ENCODE measurements at regions of chr15 and their contacts with region 1.

Region 1: DNA sequence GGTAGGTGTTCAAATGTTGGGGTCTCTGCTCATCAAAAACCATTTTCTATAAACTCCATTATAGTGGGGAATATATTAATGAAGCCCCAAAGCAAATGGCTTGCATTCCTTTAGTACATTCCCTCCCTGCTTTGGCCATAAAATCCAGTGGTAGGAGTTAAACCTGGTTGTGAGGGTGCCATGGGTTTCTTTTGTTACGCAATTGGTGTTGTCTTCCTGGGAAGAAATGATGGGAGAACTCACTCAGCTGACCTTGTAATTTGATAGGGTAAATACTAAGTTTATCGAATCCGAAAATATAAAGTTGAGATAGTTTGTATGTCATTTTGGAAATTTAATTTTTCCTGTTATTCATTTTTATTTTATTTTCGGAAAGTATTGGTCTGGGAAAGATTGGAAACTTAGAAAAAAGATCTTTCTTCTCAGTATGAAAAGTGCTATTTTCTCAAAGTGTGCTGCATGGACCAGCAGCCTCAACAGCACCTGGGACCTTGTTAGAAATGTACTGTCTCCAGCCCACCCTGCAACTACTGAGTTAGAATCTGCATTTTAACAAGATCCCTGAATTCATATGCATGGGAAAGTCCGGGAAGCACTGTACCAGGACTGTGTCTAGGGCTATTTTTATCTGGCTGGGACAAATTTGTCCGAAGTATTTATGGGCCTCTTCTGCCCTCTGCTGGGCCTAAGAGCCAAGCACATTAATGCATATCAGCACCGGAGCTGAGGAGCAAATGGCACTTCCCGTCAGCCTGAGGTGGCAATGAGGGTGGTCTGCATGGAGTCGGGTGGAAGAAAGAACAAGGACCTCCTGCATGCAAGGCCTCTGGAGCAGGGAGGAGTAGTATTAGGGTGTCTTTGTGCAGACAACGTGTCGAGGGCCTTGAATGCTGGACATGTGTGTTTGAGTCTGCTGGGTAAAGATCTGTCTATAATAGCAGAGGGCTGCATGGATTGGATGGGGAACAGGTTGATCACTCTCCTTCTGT is 54.7 kb downstream of the FAM81A start:
- DNase-seq: peak; percentile 61 to 81
- ATAC-seq: peak; percentile 95 to 98
- H3K4me3 ChIP-seq: no peak overlapping the region
- H3K27ac ChIP-seq: peak overlapping the region; percentile 55 to 71
- H3K4me1 ChIP-seq: peaks cover 9% of the 10 kb centered on the region
- CTCF ChIP-seq: peak; percentile 98
- EP300 ChIP-seq: no peak
- POLR2A ChIP-seq: no peak
- RAD21 ChIP-seq: peak; percentile 100

Region 2: GRCh38 chr15:58980351-58980939 is 512.2 kb before region 1 on chr15:
- CTCF ChIA-PET with region 1: interaction called, 47 read pairs
- POLR2A ChIA-PET with region 1: no interaction called
- DNase-seq: peak; percentile 43 to 50
- ATAC-seq: peak in 1 of 2 experiments; percentile 55; a peak in 1 of 6 replicates
- H3K4me3 ChIP-seq: no peak overlapping the region
- H3K27ac ChIP-seq: no peak overlapping the region
- H3K4me1 ChIP-seq: no peaks in the 10 kb centered on the region
- CTCF ChIP-seq: peak; percentile 87
- EP300 ChIP-seq: no peak
- POLR2A ChIP-seq: no peak
- RAD21 ChIP-seq: peak; percentile 83 to 91

Region 3: GRCh38 chr15:59131969-59132562 is 360.6 kb before region 1 on chr15:
- CTCF ChIA-PET with region 1: interaction called, 12 read pairs
- POLR2A ChIA-PET with region 1: no interaction called
- DNase-seq: no peak
- ATAC-seq: no peak
- H3K4me3 ChIP-seq: no peak overlapping the region
- H3K27ac ChIP-seq: no peak overlapping the region
- H3K4me1 ChIP-seq: no peaks in the 10 kb centered on the region
- CTCF ChIP-seq: no peak
- EP300 ChIP-seq: no peak
- POLR2A ChIP-seq: no peak
- RAD21 ChIP-seq: no peak

Region 4: DNA sequence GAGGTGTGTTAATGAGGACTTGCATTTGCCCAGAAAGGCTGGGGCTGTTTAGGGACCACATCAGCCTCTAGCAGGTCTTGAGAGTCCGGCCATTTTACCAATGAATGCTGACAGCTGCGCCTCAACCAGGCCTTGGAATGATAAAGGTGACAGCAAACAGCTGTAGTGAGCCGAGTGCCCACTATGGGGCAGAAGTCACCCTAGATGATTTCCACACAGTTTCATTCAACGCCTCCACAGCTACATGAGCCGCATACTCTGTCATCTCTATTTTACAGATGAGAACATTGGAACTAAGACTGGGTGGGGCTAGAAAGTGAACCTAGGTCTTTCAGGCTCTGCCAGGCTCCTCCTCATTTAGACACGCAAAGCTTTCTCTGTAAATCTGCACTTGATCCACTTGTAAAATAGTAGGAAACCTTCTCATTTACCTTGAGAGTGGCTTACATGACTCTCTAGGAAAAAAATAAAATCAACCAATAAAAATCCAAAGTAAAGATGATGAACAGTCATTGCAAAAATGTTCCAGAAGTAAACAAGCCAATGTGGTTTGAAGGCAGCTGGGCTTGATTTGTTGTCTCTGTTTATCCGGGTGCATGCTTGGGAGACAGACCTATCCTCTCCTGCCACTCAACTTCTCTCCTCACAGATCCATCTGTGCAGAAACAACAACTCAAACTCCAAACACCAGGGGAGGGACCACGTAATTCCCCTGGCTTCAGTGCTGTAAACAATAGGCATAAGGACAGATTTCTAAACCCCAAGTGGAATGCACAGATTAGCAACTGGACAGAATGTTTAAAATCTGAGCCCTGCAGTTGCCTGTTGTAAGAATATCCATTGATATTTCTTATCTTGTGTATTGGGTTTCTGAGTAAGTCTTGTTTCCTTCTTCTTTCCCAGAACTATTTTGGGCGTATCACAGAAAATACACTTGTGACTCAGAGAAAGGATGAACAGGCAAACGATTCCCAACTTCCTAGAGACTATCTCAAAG is 317.6 kb before region 1 on chr15:
- CTCF ChIA-PET with region 1: interaction called, 31 read pairs
- POLR2A ChIA-PET with region 1: no interaction called
- DNase-seq: peak; percentile 84 to 87
- ATAC-seq: peak; percentile 88 to 89
- H3K4me3 ChIP-seq: no peak overlapping the region
- H3K27ac ChIP-seq: peak overlapping the region; percentile 63 to 74
- H3K4me1 ChIP-seq: peaks cover 36% of the 10 kb centered on the region
- CTCF ChIP-seq: peak; percentile 82
- EP300 ChIP-seq: no peak
- POLR2A ChIP-seq: no peak
- RAD21 ChIP-seq: peak; percentile 85 to 86

Region 5: DNA sequence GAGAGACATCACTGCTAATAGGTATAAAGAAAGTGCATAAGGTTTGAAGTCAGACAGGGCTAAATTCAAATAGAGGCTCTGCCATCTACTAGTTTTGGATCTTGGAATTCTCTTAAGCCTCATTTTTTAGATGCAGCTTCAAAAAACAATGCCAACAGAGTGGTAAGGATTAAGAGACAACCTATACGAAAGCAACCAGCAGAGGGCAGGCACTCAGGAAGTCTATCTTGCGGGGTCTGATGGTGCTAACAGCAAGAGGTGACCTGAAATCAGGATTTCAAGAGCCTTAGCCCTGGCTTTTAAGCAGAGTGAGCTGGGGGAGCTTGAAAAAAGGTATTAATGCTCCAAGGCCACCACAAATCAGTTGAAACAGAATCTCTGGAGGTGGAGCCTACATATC is 245.3 kb before region 1 on chr15:
- CTCF ChIA-PET with region 1: interaction called, 29 read pairs
- POLR2A ChIA-PET with region 1: no interaction called
- DNase-seq: peak; percentile 73 to 86
- ATAC-seq: peak; percentile 75 to 88; a peak in 5 of 6 replicates
- H3K4me3 ChIP-seq: no peak overlapping the region
- H3K27ac ChIP-seq: peak overlapping the region; percentile 53 to 87
- H3K4me1 ChIP-seq: peaks cover 93% of the 10 kb centered on the region
- CTCF ChIP-seq: peak; percentile 79
- EP300 ChIP-seq: no peak
- POLR2A ChIP-seq: no peak
- RAD21 ChIP-seq: peak; percentile 79 to 81

Region 6: DNA sequence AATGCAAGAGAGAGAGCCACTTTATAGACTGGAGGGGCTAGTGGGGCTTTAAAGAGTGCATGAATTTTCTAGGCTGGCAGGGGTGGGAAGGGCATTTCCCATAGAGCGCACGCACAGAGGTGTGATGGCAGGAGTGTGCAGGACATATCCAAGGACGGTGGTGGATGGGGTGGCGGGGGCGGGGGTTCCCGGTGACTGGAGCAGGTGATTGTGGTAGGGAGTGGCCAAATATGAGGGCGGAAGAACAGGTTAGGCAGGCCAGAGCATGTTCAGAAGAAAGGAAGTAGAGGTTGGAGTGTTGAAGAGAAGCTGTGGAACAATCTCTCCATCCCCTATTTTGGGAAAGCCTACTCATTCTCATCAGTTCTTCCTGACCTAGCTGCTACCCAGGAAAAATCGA is 36.6 kb before region 1 on chr15:
- CTCF ChIA-PET with region 1: interaction called, 12 read pairs
- POLR2A ChIA-PET with region 1: no interaction called
- DNase-seq: no peak
- ATAC-seq: no peak
- H3K4me3 ChIP-seq: no peak overlapping the region
- H3K27ac ChIP-seq: no peak overlapping the region
- H3K4me1 ChIP-seq: no peaks in the 10 kb centered on the region
- CTCF ChIP-seq: no peak
- EP300 ChIP-seq: no peak
- POLR2A ChIP-seq: no peak
- RAD21 ChIP-seq: no peak